Esophagus squamous epithelium (tissue), 5 donors: ENCODE measurements at regions of chr10 and their contacts with region 1.

Region 1: DNA sequence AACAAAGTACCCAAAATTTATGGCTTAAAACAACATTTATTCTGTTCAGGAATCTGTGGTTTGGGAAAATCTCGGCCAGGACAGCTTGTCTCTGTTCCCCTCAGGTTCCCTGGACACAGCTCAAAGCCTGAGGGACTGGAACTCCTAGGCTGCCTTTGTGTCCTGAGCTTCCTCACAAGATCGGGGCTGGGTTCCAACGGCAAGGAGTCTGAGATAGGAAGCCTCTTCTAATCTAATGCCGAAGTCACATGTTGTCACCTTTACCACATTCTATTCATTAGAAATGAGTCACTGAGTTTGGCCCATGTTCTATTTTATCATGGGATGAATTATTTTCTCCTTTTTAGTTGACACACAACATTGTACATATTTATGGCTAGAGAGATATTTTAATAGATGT is 80.5 kb downstream of the ANKRD26 start:
- DNase-seq: no peak
- H3K4me3 ChIP-seq: no peak overlapping the region
- H3K27ac ChIP-seq: no peak overlapping the region
- H3K4me1 ChIP-seq: no peaks in the 10 kb centered on the region
- H3K27me3 ChIP-seq: no peaks in the 10 kb centered on the region
- CTCF ChIP-seq: no peak
- POLR2A ChIP-seq: no peak

Region 2: GRCh38 chr10:26737730-26738129 is 282.1 kb before region 1 on chr10:
- intact Hi-C with region 1: loop called (anchors 10 kb)
- DNase-seq: no peak
- H3K4me3 ChIP-seq: no peak overlapping the region
- H3K27ac ChIP-seq: peak overlapping the region in 2 of 4 donors; percentile 7 to 28
- H3K4me1 ChIP-seq: peaks cover 0 to 36% (median 5%) of the 10 kb centered on the region in 3 donors
- H3K27me3 ChIP-seq: no peaks in the 10 kb centered on the region
- CTCF ChIP-seq: no peak
- POLR2A ChIP-seq: no peak

Region 3: GRCh38 chr10:26890956-26891355 is 128.9 kb before region 1 on chr10:
- intact Hi-C with region 1: no loop called
- DNase-seq: no peak
- H3K4me3 ChIP-seq: no peak overlapping the region
- H3K27ac ChIP-seq: no peak overlapping the region
- H3K4me1 ChIP-seq: no peaks in the 10 kb centered on the region
- H3K27me3 ChIP-seq: no peaks in the 10 kb centered on the region
- CTCF ChIP-seq: peak in 5 of 6 experiments; percentile 41 to 77 (median 49)
- POLR2A ChIP-seq: no peak